Activated T-helper 1 cell treated with anti-CD3 and anti-CD28 coated beads, Interleukin-12 subunit alpha, Interleukin-12 subunit beta, Interleukin-2, Interleukin-4 antibody, amounts not matched to agents 30 ng/mL and 10 ng/mL and 1 ng/mL, durations not matched to agents 14 hours and 24 hours and 36 hours (primary cell): ENCODE measurements at regions of chr9 and their contacts with region 1.

Region 1: GRCh38 chr9:100598641-100599145 is 20.8 kb downstream of the CAVIN4 start:
- DNase-seq: peak; percentile 70
- H3K4me3 Mint-ChIP-seq: peak overlapping the region; percentile 78
- H3K27ac Mint-ChIP-seq: no peak overlapping the region
- H3K4me1 Mint-ChIP-seq: peaks cover 15% of the 10 kb centered on the region
- H3K27me3 Mint-ChIP-seq: peaks cover 20% of the 10 kb centered on the region

Region 2: DNA sequence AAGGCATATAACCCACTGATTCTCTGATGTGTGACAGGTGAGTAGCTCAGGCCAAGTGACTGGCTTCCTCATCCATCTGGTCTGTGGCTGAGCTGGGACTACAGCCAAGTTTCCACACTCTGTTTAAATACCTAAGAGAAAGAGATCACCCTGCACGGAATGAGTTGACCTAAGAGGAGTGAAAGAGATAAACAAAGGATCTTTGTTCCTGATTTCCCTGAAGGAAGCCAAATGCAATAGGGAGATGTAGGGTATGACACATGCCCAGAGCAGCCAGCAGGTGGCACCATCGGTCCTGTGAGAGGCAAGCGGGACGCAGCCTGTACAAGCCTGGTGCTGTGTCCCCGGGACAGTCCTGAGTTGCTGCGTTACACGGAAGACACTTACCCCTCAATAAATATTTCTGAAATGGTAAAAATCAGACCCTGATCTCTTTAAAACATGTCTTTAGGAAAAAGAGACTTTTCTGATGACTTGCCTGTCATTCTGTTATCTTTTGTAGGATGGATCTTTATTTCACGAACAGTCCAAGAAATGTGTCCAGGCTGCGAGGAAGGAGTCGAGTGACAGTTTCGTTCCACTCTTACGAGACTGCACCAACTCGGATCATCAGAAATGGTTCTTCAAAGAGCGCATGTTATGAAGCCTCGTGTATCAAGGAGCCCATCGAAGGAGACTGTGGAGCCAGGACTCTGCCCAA is 1750.1 kb before region 1 on chr9:
- intact Hi-C with region 1: loop called (anchors 5 kb)
- DNase-seq: peak; percentile 57
- H3K4me3 Mint-ChIP-seq: no peak overlapping the region
- H3K27ac Mint-ChIP-seq: no peak overlapping the region
- H3K4me1 Mint-ChIP-seq: peaks cover 10% of the 10 kb centered on the region
- H3K27me3 Mint-ChIP-seq: no peaks in the 10 kb centered on the region

Region 3: DNA sequence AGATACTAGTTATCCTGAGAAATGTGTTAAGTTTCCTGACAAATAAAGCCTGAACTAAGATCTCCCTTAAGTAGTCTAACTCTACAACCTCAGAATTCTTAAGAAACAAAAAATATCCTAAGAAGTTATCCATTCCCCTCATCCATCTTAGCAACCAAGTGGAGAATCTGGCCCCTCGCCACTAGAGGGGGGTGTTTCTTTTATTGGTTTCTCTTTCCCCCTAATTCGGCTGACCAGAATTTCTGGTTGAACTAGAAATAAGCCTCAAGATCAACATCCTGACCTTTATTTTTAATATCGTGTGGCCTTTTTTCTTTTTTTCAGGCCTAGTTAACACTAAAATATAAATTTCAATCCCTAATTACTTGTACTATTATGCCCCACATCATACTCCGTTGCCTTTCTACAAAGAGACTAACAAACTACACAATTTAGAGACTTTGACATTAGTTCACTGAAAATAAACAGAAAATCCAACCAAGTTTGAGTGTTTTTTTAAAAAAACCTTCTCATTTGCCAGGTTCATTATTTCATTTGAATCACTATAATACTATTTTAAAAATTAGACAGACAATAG is 791.3 kb before region 1 on chr9:
- intact Hi-C with region 1: loop called (anchors 5 kb)
- DNase-seq: peak; percentile 43
- H3K4me3 Mint-ChIP-seq: no peak overlapping the region
- H3K27ac Mint-ChIP-seq: no peak overlapping the region
- H3K4me1 Mint-ChIP-seq: peaks cover 37% of the 10 kb centered on the region
- H3K27me3 Mint-ChIP-seq: peaks cover 26% of the 10 kb centered on the region

Region 4: DNA sequence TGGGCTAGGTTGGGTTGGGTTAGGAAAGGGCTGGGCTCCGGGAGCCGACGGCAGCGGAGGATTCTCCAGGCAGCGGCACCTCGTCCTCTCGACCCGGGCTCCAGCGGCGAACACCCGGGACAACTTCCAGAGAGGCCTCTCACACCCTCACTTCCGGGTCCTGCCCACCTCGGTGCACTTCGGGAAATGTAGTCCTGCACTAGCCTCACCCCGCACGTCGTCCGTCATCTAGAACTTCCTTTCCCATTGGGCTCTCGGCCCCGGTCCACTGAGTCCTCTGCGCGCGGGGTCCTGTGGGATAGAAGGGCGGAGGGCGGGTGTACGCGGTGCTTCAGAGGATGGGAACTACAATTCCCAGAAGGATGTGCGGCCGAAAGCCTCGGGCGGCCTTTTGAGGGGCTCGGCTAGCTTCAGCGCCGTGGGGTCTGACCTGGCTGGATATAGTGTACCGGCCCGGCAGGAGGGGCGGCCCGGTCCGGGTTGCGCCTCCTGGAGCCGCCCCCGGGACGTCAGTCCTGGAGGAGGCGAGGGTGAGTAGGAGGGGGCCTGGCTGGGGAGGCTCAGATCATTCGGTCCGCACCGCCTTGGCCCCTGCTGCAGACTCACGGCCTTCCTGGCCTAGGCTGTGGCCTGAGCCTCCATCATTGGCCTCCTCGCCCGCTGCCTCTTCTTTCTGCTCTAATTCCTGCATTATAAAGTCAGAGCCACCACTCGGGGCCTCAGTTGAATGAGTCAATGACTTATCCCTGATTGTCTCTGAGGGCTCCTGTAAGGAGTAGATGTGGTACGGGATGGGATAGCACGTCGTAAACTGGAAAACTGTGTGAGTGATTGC is 499.6 kb before region 1 on chr9 and contains the starts of genes ERP44 and INVS:
- intact Hi-C with region 1: loop called (anchors 5 kb)
- DNase-seq: peak; percentile 96
- H3K4me3 Mint-ChIP-seq: peak within 1 kb of the TSS; percentile 99
- H3K27ac Mint-ChIP-seq: peak within 1 kb of the TSS; percentile 95
- H3K4me1 Mint-ChIP-seq: peaks cover 34% of the 10 kb centered on the region
- H3K27me3 Mint-ChIP-seq: no peaks in the 10 kb centered on the region
- total RNA-seq, gene ERP44: 17.3 and 18.1 TPM in 2 replicates
- total RNA-seq, gene INVS: 16.3 and 17.0 TPM in 2 replicates

Region 5: DNA sequence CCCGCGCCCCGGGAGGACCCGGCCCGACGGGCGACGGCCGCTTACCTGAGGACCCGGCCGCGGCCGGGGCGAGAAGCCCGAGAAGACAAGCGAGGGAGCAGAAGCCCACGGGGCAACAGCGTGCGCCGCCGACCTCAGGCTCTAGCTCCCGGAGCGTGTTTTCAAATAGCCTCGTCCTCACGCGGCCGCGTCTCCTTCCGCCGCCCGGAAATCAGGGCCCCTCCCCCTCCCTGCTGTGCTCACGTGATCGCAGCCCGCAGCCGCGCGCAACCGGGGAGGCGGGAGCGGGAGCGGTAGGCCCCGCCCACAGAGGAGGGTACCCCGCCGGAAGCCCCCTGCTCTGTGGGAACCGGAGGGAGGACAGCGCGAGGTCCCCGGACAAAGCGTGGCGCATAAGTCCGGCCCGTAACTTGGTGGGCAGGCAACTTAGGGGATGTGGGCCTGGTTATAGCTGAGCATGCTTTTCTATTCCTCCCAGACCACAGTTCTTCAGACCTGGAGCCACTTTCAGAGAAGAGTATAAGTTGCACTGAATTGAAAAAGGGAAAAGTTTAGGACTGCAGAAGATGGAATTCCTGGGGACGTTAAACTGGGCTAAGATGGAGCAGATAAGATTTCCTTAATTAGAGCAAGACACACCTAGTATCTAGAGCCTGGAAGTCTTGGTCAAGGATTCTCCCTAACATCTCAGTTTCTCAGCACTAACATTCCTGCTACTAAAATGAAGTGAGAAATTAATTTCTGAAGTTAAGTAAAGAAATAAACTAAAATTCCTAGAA is 245.8 kb before region 1 on chr9 and contains the start of gene TEX10:
- intact Hi-C with region 1: loop called (anchors 2 kb)
- DNase-seq: peak; percentile 85
- H3K4me3 Mint-ChIP-seq: peak within 1 kb of the TSS; percentile 91
- H3K27ac Mint-ChIP-seq: peak within 1 kb of the TSS; percentile 75
- H3K4me1 Mint-ChIP-seq: peaks cover 50% of the 10 kb centered on the region
- H3K27me3 Mint-ChIP-seq: no peaks in the 10 kb centered on the region
- total RNA-seq, gene TEX10: 30.4 and 30.9 TPM in 2 replicates

Region 6: DNA sequence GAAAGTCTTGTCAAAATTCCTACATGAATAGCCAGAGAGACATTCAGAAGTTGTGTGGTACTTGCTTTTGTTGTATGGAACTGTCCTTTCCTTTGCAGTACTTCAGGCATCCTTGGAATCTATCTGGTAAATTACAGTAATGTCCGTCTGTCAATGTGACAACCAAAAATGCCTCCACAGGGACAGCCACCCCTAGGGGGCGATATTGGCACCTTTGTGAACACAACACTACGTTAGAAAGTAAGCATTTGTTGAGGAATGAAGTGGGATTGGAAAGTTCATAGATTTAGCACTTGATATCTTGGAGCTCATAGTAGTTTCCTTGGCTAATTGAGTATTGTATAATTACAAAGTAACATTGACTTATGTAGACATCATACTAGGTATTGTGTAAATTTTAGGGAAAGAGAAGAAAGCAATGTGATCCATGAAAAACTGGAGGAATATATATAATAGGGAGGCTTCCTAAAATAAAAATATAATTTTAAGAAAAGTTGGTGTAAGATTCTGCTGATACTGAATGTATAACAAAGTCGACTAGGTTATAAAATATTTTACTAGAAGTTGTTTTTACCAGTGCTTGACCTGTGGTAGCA is 93.0 kb before region 1 on chr9:
- intact Hi-C with region 1: loop called (anchors 1 kb)
- DNase-seq: peak; percentile 32
- H3K4me3 Mint-ChIP-seq: no peak overlapping the region
- H3K27ac Mint-ChIP-seq: no peak overlapping the region
- H3K4me1 Mint-ChIP-seq: no peaks in the 10 kb centered on the region
- H3K27me3 Mint-ChIP-seq: peaks cover 3% of the 10 kb centered on the region